Heart right ventricle (tissue), 16 donors: ENCODE measurements at regions of chr5 and their contacts with region 1.

Region 1: DNA sequence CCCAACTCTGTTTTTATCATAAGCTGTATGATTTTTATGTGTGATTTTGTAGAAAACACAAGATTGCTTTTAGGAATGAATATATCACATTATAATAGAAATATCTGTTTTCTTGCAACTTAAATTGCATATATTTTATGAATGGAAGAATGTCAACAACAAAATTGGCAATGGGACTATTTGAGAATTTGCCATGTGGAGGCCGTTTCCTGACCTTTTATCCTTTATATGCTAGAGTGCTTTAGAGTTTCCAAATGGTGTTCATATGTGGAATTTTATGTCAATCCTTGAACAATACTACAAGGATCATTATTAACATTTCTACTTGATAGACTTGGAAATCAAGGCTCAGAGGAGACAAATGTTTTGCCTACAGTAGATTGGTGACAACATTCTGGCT is 34.2 kb downstream of the ITGA1 start:
- DNase-seq: no peak
- ATAC-seq: no peak
- H3K4me3 ChIP-seq: no peak overlapping the region
- H3K27ac ChIP-seq: peak overlapping the region in 7 of 10 donors; percentile 1 to 71 (median 45)
- H3K4me1 ChIP-seq: peaks cover 0 to 53% (median 20%) of the 10 kb centered on the region in 9 donors
- H3K27me3 ChIP-seq: no peaks in the 10 kb centered on the region
- CTCF ChIP-seq: no peak

Region 2: GRCh38 chr5:52867809-52868208 is 45.9 kb after region 1 on chr5:
- intact Hi-C with region 1: loop called in 1 of 10 experiments (anchors 2 kb)
- DNase-seq: no peak
- ATAC-seq: no peak
- H3K4me3 ChIP-seq: no peak overlapping the region
- H3K27ac ChIP-seq: no peak overlapping the region
- H3K4me1 ChIP-seq: peaks cover 0 to 51% (median 38%) of the 10 kb centered on the region in 9 donors
- H3K27me3 ChIP-seq: no peaks in the 10 kb centered on the region
- CTCF ChIP-seq: no peak